ENCODE measurements at regions of chr22 and their contacts with region 1.

Region 1: GRCh38 chr22:46071451-46072109 is 78.7 kb upstream of the PPARA start:
- DNase-seq: peak; percentile 94 to 97
- ATAC-seq: peak; percentile 31 to 67 (median 48)
- H3K4me3 ChIP-seq: peak overlapping the region; percentile 57 to 98 (median 83)
- H3K27ac ChIP-seq: peak overlapping the region; percentile 93 to 100 (median 98)
- H3K4me1 ChIP-seq: peaks cover 8 to 78% (median 57%) of the 10 kb centered on the region in 9 donors
- H3K27me3 ChIP-seq: no peaks in the 10 kb centered on the region
- CTCF ChIP-seq: no peak

Region 2: GRCh38 chr22:46006379-46007002 is 65.1 kb before region 1 on chr22:
- intact Hi-C with region 1: loop called in 6 of 10 experiments (anchors 5 to 10 kb)
- DNase-seq: peak; percentile 96 to 97
- ATAC-seq: peak; percentile 55 to 85 (median 76)
- H3K4me3 ChIP-seq: peak overlapping the region in 8 of 10 donors; percentile 3 to 40 (median 32)
- H3K27ac ChIP-seq: peak overlapping the region; percentile 90 to 100 (median 96)
- H3K4me1 ChIP-seq: peaks cover 39 to 76% (median 63%) of the 10 kb centered on the region in 9 donors
- H3K27me3 ChIP-seq: no peaks in the 10 kb centered on the region
- CTCF ChIP-seq: peak; percentile 92 to 98 (median 97)

Region 3: GRCh38 chr22:46013460-46014416 is 57.8 kb before region 1 on chr22:
- intact Hi-C with region 1: loop called in 8 of 10 experiments (anchors 2 to 10 kb)
- DNase-seq: peak; percentile 94
- ATAC-seq: peak; percentile 91 to 96 (median 95)
- H3K4me3 ChIP-seq: peak overlapping the region; percentile 27 to 79 (median 63)
- H3K27ac ChIP-seq: peak overlapping the region; percentile 92 to 100 (median 96)
- H3K4me1 ChIP-seq: peaks cover 7 to 49% (median 33%) of the 10 kb centered on the region in 9 donors
- H3K27me3 ChIP-seq: no peaks in the 10 kb centered on the region
- CTCF ChIP-seq: peak; percentile 56 to 86 (median 76)

Region 4: GRCh38 chr22:46035742-46036557 is 35.6 kb before region 1 on chr22:
- intact Hi-C with region 1: loop called in 2 of 10 experiments (anchors 5 kb)
- DNase-seq: peak; percentile 99 to 100
- ATAC-seq: peak; percentile 94 to 98 (median 96)
- H3K4me3 ChIP-seq: peak overlapping the region; percentile 50 to 86 (median 71)
- H3K27ac ChIP-seq: peak overlapping the region; percentile 83 to 99 (median 97)
- H3K4me1 ChIP-seq: peaks cover 6 to 36% (median 17%) of the 10 kb centered on the region in 9 donors
- H3K27me3 ChIP-seq: no peaks in the 10 kb centered on the region
- CTCF ChIP-seq: no peak

Region 5: GRCh38 chr22:46054091-46055073 is 17.2 kb before region 1 on chr22:
- intact Hi-C with region 1: loop called in 1 of 10 experiments (anchors 2 kb)
- DNase-seq: peak; percentile 77 to 86
- ATAC-seq: peak; percentile 55 to 79 (median 68)
- H3K4me3 ChIP-seq: peak overlapping the region; percentile 68 to 87 (median 78)
- H3K27ac ChIP-seq: peak overlapping the region; percentile 98 to 100 (median 100)
- H3K4me1 ChIP-seq: peaks cover 36 to 92% (median 83%) of the 10 kb centered on the region in 9 donors
- H3K27me3 ChIP-seq: no peaks in the 10 kb centered on the region
- CTCF ChIP-seq: no peak

Region 6: DNA sequence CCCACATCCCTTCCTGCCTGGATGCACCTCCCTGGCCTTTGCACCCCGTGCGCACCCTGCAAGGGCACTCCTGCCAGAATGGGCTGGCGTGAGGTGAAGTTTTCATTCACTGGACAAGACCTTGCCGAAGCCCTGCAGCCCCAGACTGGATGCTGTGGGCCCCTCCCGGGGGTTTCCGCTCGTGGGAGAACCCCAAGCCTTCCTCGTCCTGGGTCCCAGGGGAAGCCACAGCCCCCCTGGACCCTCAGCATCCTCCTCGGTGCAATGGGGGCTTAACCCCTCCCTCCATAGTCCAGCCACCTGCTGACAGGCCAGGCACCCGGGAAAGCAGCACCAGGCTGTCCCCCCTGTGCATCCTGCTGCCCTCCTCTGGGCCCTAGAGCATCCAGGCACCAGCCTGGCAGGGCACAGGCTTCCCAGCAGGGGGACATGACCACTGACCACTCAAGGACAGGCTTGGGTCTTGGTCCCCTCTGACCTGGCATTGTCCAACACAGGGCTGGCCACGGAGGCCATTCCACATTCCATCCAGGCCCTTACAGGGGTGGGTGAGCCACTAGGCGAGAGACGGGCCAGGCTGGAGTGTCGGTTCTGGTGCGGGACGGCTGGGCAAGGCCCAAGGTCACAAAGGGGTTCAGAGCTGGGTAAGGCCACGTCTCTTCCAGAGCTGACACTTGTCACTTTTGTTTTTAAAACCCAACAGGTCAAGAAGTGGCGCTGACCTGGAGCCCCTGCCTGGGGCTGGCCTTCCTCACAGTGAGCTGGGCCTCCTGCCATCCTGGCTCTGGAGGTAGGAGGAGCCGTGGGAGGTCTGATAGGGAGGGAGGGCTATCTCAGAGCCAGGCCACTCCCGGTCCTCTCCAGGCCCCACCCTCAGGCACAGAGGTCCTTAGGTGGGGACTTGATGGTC is 37.2 kb after region 1 on chr22:
- intact Hi-C with region 1: loop called in 5 of 10 experiments (anchors 5 kb)
- DNase-seq: peak; percentile 71 to 73
- ATAC-seq: peak; percentile 15 to 53 (median 36)
- H3K4me3 ChIP-seq: no peak overlapping the region
- H3K27ac ChIP-seq: peak overlapping the region; percentile 16 to 94 (median 86)
- H3K4me1 ChIP-seq: peaks cover 87 to 100% (median 99%) of the 10 kb centered on the region in 9 donors
- H3K27me3 ChIP-seq: no peaks in the 10 kb centered on the region
- CTCF ChIP-seq: no peak

Measured in heart right ventricle (tissue), 16 donors.